Left ventricle myocardium inferior (tissue), 1 donor: ENCODE measurements at regions of chr6 and their contacts with region 1.

Region 1: DNA sequence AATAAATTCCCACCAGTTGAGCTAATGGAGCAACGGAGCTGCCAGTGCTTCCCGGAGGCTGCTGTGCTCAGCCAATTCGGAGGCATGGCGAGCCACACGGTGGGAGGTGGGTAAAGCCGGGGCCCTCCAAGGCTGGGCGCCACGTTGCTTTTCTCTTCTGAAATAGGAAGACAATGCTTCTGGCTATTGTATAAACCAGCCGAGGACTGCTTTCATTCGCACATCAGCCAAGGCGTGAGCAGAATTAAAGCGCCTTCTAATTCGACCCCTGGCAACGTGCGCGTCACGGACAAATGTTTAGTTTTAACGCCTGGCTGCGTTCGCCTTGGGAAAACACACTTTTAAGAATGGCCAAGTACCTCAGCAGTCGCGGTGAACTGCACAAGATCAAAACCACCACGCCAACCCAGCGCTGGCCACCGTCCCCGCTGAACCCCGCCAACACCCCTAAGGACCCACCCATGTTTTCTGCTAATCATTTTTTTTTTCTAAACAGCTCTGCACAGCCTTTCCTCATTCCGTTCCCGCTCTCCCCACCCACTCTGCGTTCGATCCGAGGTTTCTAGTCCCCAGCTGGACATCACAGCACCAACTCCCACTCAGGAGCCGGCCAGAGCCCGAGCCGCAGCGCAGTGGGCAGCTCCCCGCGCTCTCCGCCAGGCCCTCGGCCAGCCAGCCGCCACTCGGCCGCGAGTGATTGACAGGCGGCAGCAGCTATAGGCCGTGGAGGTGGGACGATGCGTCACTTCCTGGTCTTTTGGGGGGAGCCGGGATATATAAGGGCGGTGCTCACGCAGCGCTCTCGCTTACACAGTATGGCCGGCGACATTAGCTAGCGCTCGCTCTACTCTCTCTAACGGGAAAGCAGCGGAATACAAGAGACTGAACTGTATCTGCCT is at the start of gene AMD1:
- DNase-seq: peak; percentile 98
- H3K4me3 ChIP-seq: peak within 1 kb of the TSS; percentile 93
- H3K27ac ChIP-seq: peak within 1 kb of the TSS; percentile 95
- H3K4me1 ChIP-seq: peaks cover 54% of the 10 kb centered on the region
- H3K27me3 ChIP-seq: no peaks in the 10 kb centered on the region
- CTCF ChIP-seq: no peak
- total RNA-seq, gene AMD1: 72.8 TPM

Region 2: DNA sequence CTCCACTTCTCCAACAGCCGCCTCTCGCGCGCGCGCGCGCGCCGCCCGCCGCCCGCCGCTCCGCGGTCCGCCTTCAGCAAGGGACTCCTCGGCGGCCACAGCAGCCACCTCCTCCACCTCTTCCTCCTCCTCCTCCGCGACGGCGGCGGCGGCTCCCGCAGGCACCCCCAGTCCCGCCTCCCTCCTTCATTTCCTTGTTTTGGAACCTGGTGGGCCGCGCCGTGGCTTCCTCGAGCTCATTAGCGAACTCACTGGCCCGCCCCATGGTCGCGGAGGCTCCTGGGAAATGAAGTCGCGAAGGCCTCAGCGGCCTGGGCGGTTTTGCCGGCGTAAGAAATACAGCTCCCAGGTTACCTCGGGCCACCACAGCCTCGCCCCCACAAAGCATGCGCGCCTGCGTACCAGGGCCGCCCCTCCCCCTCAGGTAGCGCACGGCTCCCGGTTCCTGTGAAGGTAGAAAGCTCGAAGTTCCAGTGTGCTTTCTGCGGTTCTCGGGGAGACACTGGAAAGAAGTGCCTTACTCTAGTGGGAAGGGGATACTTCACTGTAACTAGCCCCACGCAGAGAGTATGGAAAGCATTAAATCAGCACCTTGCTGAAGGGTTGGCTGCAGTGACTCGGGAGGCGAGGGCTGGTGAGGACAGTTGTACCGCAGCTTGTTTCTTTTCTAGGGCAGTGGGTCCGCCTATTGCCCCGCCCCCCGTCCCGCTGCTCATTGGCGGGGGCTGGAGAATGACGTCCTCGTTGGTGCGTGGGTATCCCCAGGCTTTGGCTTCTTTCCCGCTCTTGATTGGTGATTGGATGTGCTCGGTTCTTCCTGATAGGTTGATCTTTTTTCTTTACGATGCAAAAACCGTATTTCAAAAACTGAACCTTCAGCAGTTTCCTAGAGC is 58.8 kb before region 1 on chr6 and contains the start of gene CDK19:
- intact Hi-C with region 1: loop called (anchors 10 kb)
- DNase-seq: peak; percentile 98
- H3K4me3 ChIP-seq: peak within 1 kb of the TSS; percentile 100
- H3K27ac ChIP-seq: peak within 1 kb of the TSS; percentile 94
- H3K4me1 ChIP-seq: peaks cover 29% of the 10 kb centered on the region
- H3K27me3 ChIP-seq: no peaks in the 10 kb centered on the region
- CTCF ChIP-seq: no peak
- total RNA-seq, gene CDK19: 9.1 TPM

Region 3: DNA sequence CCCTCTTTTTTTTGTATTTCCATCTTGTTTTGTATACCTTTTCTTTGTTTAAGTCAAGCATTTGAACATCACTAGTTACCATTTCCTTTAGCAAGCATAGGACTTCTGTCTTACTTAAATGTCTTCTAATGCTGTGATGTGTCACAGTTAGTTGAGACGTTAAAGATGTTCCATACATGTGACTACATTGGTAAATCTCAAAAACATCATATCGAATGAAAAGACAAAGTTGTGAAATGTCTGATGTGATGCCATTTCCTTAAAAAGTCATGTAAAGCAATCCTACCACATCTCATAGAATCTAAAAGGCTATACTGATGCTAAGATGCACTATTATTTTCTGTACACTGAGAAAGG is 239.8 kb after region 1 on chr6:
- intact Hi-C with region 1: no loop called
- DNase-seq: no peak
- H3K4me3 ChIP-seq: no peak overlapping the region
- H3K27ac ChIP-seq: peak overlapping the region; percentile 77
- H3K4me1 ChIP-seq: peaks cover 33% of the 10 kb centered on the region
- H3K27me3 ChIP-seq: no peaks in the 10 kb centered on the region
- CTCF ChIP-seq: no peak